ENCODE measurements at regions of chr6 and their contacts with region 1.

Region 1: DNA sequence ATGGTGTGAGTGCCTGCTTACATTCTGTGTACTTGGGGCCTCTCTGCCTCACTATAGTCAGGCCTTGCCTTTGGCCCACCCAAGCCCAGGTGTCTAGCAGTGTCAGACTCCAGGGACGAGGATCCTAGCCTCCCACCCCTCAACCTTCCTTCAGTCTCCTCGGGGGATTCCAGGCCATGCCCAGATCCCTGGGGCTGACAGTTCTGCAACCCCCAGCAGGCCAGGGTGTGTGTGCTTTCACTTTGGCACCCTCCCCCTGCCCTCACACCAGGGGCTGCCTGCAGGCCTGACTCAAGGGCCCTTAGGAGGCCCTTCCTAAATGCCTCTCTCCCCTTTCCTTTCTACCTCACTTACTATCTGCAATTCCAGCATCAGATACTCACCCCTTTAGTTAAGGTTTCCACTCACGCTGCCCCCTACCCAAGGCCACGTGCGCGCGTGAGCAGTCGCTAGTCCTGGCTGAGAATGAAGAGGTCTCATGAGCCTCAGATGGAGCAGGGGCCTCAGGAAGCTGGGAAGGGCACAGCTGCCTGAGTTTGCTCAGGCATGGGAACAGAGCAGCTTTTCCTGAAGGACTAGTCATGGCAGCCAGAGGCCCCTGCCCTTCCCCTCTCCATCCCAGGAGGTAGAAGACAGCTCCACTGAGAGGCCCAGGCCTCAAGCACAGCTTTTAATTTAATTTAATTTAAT is 859 bp upstream of the CLPS start:
- DNase-seq: no peak
- H3K4me3 ChIP-seq: no peak overlapping the region
- H3K27ac ChIP-seq: no peak overlapping the region
- H3K4me1 ChIP-seq: no peaks in the 10 kb centered on the region
- H3K27me3 ChIP-seq: no peaks in the 10 kb centered on the region
- CTCF ChIP-seq: no peak

Region 2: GRCh38 chr6:35534407-35535170 is 263.4 kb before region 1 on chr6:
- CTCF ChIA-PET with region 1: no interaction called
- POLR2A ChIA-PET with region 1: no interaction called
- intact Hi-C with region 1: no loop called
- DNase-seq: peak; percentile 78
- H3K4me3 ChIP-seq: no peak overlapping the region
- H3K27ac ChIP-seq: peak overlapping the region; percentile 41
- H3K4me1 ChIP-seq: peaks cover 14% of the 10 kb centered on the region
- H3K27me3 ChIP-seq: no peaks in the 10 kb centered on the region
- CTCF ChIP-seq: no peak

Region 3: GRCh38 chr6:35787266-35788218 is 10.4 kb before region 1 on chr6:
- CTCF ChIA-PET with region 1: no interaction called
- POLR2A ChIA-PET with region 1: no interaction called
- intact Hi-C with region 1: loop called (anchors 1 kb)
- DNase-seq: no peak
- H3K4me3 ChIP-seq: no peak overlapping the region
- H3K27ac ChIP-seq: no peak overlapping the region
- H3K4me1 ChIP-seq: no peaks in the 10 kb centered on the region
- H3K27me3 ChIP-seq: peaks cover 35% of the 10 kb centered on the region
- CTCF ChIP-seq: no peak

Region 4: GRCh38 chr6:35905841-35906498 is 108.0 kb after region 1 on chr6:
- CTCF ChIA-PET with region 1: no interaction called
- POLR2A ChIA-PET with region 1: no interaction called
- intact Hi-C with region 1: no loop called
- DNase-seq: no peak
- H3K4me3 ChIP-seq: no peak overlapping the region
- H3K27ac ChIP-seq: no peak overlapping the region
- H3K4me1 ChIP-seq: no peaks in the 10 kb centered on the region
- H3K27me3 ChIP-seq: no peaks in the 10 kb centered on the region
- CTCF ChIP-seq: no peak

Measured in A673 (cell line).